ENCODE measurements at regions of chr2 and their contacts with region 1.

Region 1: GRCh38 chr2:9630749-9631483 is at the start of gene YWHAQ:
- DNase-seq: peak; percentile 95 to 100 (median 97)
- ATAC-seq: peak; percentile 90
- H3K4me3 ChIP-seq: peak within 1 kb of the TSS; percentile 90 to 93
- H3K4me3 Mint-ChIP-seq: peak within 1 kb of the TSS; percentile 93
- H3K27ac ChIP-seq: peak within 1 kb of the TSS; percentile 89 to 91
- H3K27ac Mint-ChIP-seq: peak within 1 kb of the TSS; percentile 94
- H3K4me1 ChIP-seq: peaks cover 37% of the 10 kb centered on the region
- H3K4me1 Mint-ChIP-seq: peaks cover 46% of the 10 kb centered on the region
- H3K27me3 ChIP-seq: no peaks in the 10 kb centered on the region
- H3K27me3 Mint-ChIP-seq: no peaks in the 10 kb centered on the region
- CTCF ChIP-seq: no peak
- total RNA-seq, gene YWHAQ: 115 to 123 TPM

Region 2: DNA sequence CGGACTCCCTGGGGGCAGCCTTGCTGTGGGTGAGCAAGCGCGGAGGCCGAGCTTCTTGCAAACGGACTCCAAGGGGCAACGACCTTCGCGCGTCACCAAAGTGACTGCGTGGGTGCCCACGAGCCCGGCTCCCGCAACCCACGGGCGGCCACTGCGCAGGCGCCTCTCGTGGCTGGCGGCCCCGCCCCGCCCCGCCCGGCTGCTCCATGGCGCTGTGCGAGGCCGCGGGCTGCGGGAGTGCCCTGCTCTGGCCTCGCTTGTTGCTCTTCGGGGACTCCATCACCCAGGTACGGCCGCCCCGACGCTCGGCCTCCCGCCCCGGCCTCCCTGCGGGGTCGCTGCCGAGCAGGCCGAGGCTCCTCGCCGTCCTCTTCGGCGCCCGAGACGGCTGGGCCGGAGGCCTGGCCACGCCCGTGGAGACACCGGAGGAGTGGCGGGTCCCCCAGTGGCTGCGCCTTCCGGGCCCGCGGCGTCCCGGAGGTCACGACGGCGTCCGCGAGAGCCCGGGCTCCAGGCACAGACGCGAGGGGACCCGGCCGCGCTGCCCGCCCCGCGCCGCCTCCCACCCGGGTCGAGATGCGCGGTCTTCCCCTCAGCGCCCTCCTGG is 156.5 kb before region 1 on chr2 and contains the start of gene IAH1:
- CTCF ChIA-PET with region 1: no interaction called
- POLR2A ChIA-PET with region 1: interaction called, 5 read pairs
- intact Hi-C with region 1: loop called in 1 of 2 experiments (anchors 1 kb)
- DNase-seq: peak; percentile 58 to 86 (median 74)
- ATAC-seq: peak; percentile 80
- H3K4me3 ChIP-seq: peak within 1 kb of the TSS; percentile 83 to 91
- H3K4me3 Mint-ChIP-seq: peak within 1 kb of the TSS; percentile 84
- H3K27ac ChIP-seq: peak within 1 kb of the TSS; percentile 95 to 97
- H3K27ac Mint-ChIP-seq: peak within 1 kb of the TSS; percentile 90
- H3K4me1 ChIP-seq: peaks cover 18% of the 10 kb centered on the region
- H3K4me1 Mint-ChIP-seq: peaks cover 50% of the 10 kb centered on the region
- H3K27me3 ChIP-seq: no peaks in the 10 kb centered on the region
- H3K27me3 Mint-ChIP-seq: no peaks in the 10 kb centered on the region
- CTCF ChIP-seq: no peak
- total RNA-seq, gene IAH1: 48.2 to 52.5 TPM

Region 3: GRCh38 chr2:9613291-9613690 is 17.6 kb before region 1 on chr2:
- CTCF ChIA-PET with region 1: interaction called, 5 read pairs
- POLR2A ChIA-PET with region 1: interaction called, 28 read pairs
- intact Hi-C with region 1: loop called in 1 of 2 experiments (anchors 2 kb)
- DNase-seq: no peak
- ATAC-seq: no peak
- H3K4me3 ChIP-seq: no peak overlapping the region
- H3K4me3 Mint-ChIP-seq: no peak overlapping the region
- H3K27ac ChIP-seq: no peak overlapping the region
- H3K27ac Mint-ChIP-seq: no peak overlapping the region
- H3K4me1 ChIP-seq: peaks cover 39% of the 10 kb centered on the region
- H3K4me1 Mint-ChIP-seq: peaks cover 91% of the 10 kb centered on the region
- H3K27me3 ChIP-seq: no peaks in the 10 kb centered on the region
- H3K27me3 Mint-ChIP-seq: no peaks in the 10 kb centered on the region
- CTCF ChIP-seq: no peak

Region 4: DNA sequence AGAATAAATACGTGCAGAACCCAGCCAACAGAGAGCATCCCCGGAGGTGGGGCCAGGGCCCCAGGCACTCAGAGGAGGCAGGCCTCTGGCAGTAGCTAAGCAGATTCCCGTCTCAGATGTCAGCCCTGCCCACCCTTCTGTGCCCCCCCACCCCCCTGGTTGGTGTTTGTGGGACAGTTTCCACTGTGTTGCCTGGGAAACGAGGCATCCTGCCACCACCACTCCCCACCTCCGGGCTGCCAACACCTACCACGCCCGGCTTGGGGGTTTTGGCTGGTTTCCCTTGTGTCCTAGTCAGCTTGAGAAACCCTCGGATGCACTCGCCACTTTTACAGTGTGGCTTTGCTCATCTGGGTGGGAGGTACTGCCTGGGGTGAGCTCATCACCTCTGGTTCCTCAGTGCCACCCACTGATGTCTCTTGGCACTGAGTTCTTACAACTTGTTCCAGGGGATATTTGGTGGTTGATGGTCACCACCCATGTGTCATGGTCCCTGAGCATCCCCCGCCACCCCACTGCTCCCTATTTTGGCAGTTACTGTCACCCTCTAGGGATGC is 72.2 kb after region 1 on chr2:
- CTCF ChIA-PET with region 1: no interaction called
- POLR2A ChIA-PET with region 1: interaction called, 7 read pairs
- intact Hi-C with region 1: loop called in 1 of 2 experiments (anchors 1 kb)
- DNase-seq: peak; percentile 65 to 98 (median 84)
- ATAC-seq: peak; percentile 88
- H3K4me3 ChIP-seq: no peak overlapping the region
- H3K4me3 Mint-ChIP-seq: no peak overlapping the region
- H3K27ac ChIP-seq: peak overlapping the region; percentile 54 to 91
- H3K27ac Mint-ChIP-seq: peak overlapping the region; percentile 63
- H3K4me1 ChIP-seq: peaks cover 17% of the 10 kb centered on the region
- H3K4me1 Mint-ChIP-seq: peaks cover 28% of the 10 kb centered on the region
- H3K27me3 ChIP-seq: no peaks in the 10 kb centered on the region
- H3K27me3 Mint-ChIP-seq: no peaks in the 10 kb centered on the region
- CTCF ChIP-seq: no peak

Region 5: GRCh38 chr2:9951272-9951972 is 320.5 kb after region 1 on chr2 and contains the start of gene GRHL1:
- CTCF ChIA-PET with region 1: no interaction called
- POLR2A ChIA-PET with region 1: no interaction called
- intact Hi-C with region 1: loop called in 1 of 2 experiments (anchors 5 kb)
- DNase-seq: peak; percentile 77 to 96 (median 89)
- ATAC-seq: peak; percentile 94
- H3K4me3 ChIP-seq: peak within 1 kb of the TSS; percentile 52 to 58
- H3K4me3 Mint-ChIP-seq: peak within 1 kb of the TSS; percentile 84
- H3K27ac ChIP-seq: no peak within 1 kb of the TSS
- H3K27ac Mint-ChIP-seq: peak within 1 kb of the TSS; percentile 41
- H3K4me1 ChIP-seq: peaks cover 11% of the 10 kb centered on the region
- H3K4me1 Mint-ChIP-seq: peaks cover 6% of the 10 kb centered on the region
- H3K27me3 ChIP-seq: peaks cover 8% of the 10 kb centered on the region in 2 experiments
- H3K27me3 Mint-ChIP-seq: peaks cover 42% of the 10 kb centered on the region
- CTCF ChIP-seq: no peak
- total RNA-seq, gene GRHL1: 0.76 to 0.86 TPM

Region 6: GRCh38 chr2:11532380-11533054 is 1901.6 kb after region 1 on chr2:
- CTCF ChIA-PET with region 1: no interaction called
- POLR2A ChIA-PET with region 1: no interaction called
- intact Hi-C with region 1: no loop called
- DNase-seq: no peak
- ATAC-seq: no peak
- H3K4me3 ChIP-seq: no peak overlapping the region
- H3K4me3 Mint-ChIP-seq: no peak overlapping the region
- H3K27ac ChIP-seq: no peak overlapping the region
- H3K27ac Mint-ChIP-seq: no peak overlapping the region
- H3K4me1 ChIP-seq: no peaks in the 10 kb centered on the region
- H3K4me1 Mint-ChIP-seq: no peaks in the 10 kb centered on the region
- H3K27me3 ChIP-seq: no peaks in the 10 kb centered on the region
- H3K27me3 Mint-ChIP-seq: peaks cover 21% of the 10 kb centered on the region
- CTCF ChIP-seq: no peak

Measured in CD8-positive, alpha-beta T cell (primary cell).